Left ventricle myocardium superior (tissue), 1 donor: ENCODE measurements at regions of chr14 and their contacts with region 1.

Region 1: GRCh38 chr14:25049568-25050268 is at the start of gene STXBP6:
- DNase-seq: peak; percentile 91
- ATAC-seq: peak; percentile 91
- total RNA-seq, gene STXBP6: 43.5 TPM

Region 2: DNA sequence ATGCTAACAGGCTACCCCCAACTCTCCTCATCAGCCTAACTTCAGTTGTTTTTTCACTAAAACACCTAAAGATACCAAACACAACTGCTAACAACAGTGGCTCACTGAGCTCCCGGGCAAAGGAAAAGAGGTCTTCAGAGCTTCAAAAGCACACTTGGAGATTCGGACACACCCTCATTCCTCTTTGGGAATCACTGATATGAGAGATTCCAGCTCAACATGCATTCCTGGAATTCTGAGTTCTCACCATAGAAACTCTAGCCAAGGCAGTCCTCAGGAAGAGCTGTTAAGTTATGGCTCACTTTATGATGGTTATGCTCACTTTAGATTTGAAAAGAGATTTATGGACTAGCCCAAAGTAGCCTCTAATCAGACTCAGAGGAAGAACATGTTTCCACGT is 39.8 kb before region 1 on chr14:
- intact Hi-C with region 1: no loop called
- DNase-seq: no peak
- ATAC-seq: no peak

Region 3: GRCh38 chr14:25111061-25111601 is 61.4 kb after region 1 on chr14:
- intact Hi-C with region 1: loop called (anchors 10 kb)
- DNase-seq: no peak
- ATAC-seq: peak; percentile 99